AG04450 (cell line): ENCODE measurements at regions of chr14 and their contacts with region 1.

Region 1: DNA sequence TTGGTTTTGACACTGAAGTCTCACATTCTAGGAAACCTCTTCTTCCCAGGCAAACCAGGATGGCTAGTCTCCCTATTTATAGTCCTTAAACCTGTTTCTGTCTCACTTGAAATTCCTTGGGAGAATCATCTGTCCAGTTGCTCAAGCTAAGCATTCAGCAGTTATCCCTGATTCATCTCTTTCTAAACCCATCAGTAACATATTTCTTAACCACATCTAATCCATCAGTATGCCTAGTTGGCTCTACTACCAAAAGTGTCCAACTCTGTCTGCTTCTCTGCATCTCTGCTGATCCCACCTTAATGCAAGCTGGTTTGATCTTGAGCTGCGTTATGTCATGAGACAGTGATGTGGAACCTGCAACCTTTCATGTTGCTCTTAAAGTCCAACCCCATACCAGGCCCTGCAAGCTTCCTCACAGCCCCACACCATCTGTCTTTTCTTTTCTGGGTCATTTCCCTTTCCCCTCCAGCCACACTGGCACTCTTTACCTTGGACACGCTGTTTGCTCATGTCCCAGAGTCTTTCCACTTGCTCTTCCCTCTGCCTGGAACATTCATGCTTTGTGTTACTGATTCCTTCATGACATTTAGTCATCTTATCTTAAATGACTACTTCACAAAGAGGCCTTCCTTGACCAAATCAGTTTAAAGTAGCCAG is 380.8 kb upstream of the RGS6 start:
- DNase-seq: peak; percentile 44
- H3K4me3 ChIP-seq: no peak overlapping the region
- H3K27ac ChIP-seq: no peak overlapping the region
- H3K27me3 ChIP-seq: no peaks in the 10 kb centered on the region
- CTCF ChIP-seq: no peak

Region 2: GRCh38 chr14:71472043-71472960 is 79.1 kb before region 1 on chr14:
- CTCF ChIA-PET with region 1: no interaction called
- POLR2A ChIA-PET with region 1: interaction called, 10 read pairs
- DNase-seq: no peak
- H3K4me3 ChIP-seq: no peak overlapping the region
- H3K27ac ChIP-seq: no peak overlapping the region
- H3K27me3 ChIP-seq: no peaks in the 10 kb centered on the region
- CTCF ChIP-seq: no peak

Region 3: GRCh38 chr14:71521238-71522135 is 29.9 kb before region 1 on chr14:
- CTCF ChIA-PET with region 1: no interaction called
- POLR2A ChIA-PET with region 1: no interaction called
- DNase-seq: no peak
- H3K4me3 ChIP-seq: no peak overlapping the region
- H3K27ac ChIP-seq: no peak overlapping the region
- H3K27me3 ChIP-seq: no peaks in the 10 kb centered on the region
- CTCF ChIP-seq: no peak